ENCODE measurements at regions of chr10 and their contacts with region 1.

Region 1: GRCh38 chr10:61140765-61141392 is 196.9 kb upstream of the RHOBTB1 start:
- ATAC-seq: peak in 6 of 8 experiments; percentile 22 to 57 (median 41)
- H3K4me3 ChIP-seq: no peak overlapping the region
- H3K27ac ChIP-seq: no peak overlapping the region
- H3K4me1 ChIP-seq: peaks cover 0 to 2% of the 10 kb centered on the region in 2 donors

Region 2: GRCh38 chr10:61211468-61211867 is 70.6 kb after region 1 on chr10:
- in situ Hi-C with region 1: no loop called
- ATAC-seq: no peak
- H3K4me3 ChIP-seq: no peak overlapping the region
- H3K27ac ChIP-seq: no peak overlapping the region
- H3K4me1 ChIP-seq: no peaks in the 10 kb centered on the region

Region 3: DNA sequence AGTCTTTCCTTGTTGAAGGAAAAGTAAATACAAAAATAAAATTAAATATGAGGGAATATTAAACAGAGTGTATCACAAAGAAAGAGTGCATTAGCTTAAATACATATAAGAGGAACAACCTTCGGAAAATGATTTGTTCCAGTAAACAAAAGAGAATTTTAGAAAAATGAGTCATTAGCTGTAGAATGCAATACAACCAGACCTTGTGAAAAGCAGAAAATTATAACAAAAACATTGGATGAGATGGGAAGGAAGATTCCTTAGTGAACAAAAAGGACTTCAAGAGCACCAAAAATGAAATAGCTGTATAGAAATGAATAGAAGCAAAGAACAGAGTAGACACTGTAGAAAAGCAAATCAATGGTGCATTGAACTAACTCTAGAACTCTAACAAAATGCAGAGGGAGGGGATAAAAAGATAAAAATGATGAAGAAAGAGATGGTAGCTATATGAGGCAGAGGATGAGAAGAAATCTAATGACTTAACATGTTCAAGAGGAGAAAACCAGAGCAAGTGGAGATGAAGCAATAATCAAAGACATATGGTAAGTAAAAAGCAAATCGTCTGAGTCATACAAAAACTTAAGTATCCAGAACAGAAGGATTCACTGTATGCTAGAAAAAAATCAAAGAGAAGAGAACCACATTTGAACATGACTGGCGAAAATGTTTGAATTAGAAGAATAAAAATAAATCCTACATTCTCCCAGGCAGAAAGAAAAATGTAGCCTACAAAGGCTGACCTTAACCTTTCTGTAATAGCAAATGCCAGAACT is 121.8 kb after region 1 on chr10:
- in situ Hi-C with region 1: loop called in 1 of 9 experiments (anchors 10 kb)
- ATAC-seq: peak in 2 of 8 experiments; percentile 84 to 85
- H3K4me3 ChIP-seq: no peak overlapping the region
- H3K27ac ChIP-seq: no peak overlapping the region
- H3K4me1 ChIP-seq: peaks cover 13 to 24% of the 10 kb centered on the region in 2 donors

Region 4: DNA sequence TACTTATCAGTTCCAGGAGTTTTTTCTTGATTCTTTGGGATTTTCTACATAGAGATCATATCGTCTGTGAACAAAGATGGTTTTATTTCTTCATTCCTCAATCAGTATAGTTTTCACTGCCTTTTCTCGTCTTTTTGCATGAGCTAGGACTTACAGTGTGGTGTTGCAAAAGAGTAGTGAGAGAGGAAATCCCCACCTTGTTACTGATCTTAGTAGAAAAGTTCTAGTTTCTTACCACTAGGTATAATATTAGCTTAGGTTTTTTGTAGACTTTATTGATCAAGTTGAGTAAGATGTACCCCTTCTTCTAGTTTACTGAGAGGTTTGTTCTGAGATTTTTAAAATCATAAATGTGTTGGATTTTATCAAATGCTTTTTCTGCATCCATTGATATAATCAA is 189.0 kb after region 1 on chr10:
- in situ Hi-C with region 1: no loop called
- ATAC-seq: no peak
- H3K4me3 ChIP-seq: no peak overlapping the region
- H3K27ac ChIP-seq: no peak overlapping the region
- H3K4me1 ChIP-seq: peaks cover 0 to under 1% of the 10 kb centered on the region in 2 donors

Region 5: GRCh38 chr10:61733358-61733940 is 592.6 kb after region 1 on chr10:
- in situ Hi-C with region 1: loop called in 1 of 9 experiments (anchors 25 kb)
- ATAC-seq: peak in 2 of 8 experiments; percentile 27 to 33
- H3K4me3 ChIP-seq: no peak overlapping the region
- H3K27ac ChIP-seq: no peak overlapping the region
- H3K4me1 ChIP-seq: no peaks in the 10 kb centered on the region